ENCODE measurements at regions of chrX and their contacts with region 1.

Region 1: DNA sequence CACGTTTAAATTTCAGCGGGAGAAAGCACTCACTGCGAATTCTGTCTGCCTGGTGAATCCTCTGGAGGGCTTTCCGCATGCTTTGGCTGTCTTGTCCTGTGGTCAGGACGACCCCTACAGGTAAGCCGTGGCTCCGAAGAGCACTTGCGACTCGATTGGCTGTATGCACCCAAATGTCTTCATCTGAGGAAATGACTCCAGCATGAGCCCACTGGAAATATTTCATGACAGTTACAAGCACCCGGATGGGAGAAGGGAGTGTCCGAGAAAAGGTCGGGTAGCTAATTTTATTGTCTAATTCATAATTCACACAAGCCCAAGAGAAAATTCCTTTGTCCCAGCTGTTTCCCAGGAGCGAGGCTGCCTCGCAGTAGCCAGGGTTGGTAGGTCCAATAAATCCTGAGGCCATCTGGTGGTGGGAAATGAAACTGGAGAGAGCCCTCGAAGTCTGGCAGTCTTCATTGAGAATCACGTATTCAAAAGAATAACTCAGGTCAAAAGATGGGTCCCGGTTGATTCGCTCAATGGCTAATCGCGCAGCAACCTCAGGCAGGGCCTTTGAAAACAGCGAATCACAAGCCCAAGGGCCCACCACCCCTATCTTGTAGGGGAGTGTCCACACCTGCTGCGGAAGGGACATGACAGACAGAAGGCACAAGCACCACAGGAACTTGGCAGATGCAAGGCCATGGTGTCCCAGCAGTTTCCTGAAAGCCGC is 6.6 kb downstream of the GUCY2F start:
- DNase-seq: peak in 1 of 2 experiments; percentile 54
- H3K4me3 ChIP-seq: peak overlapping the region in 1 of 4 experiments; percentile 42; a peak in 1 of 8 replicates
- H3K27ac ChIP-seq: no peak overlapping the region
- H3K4me1 ChIP-seq: peaks cover 0 to 10% (median 4%) of the 10 kb centered on the region in 4 experiments; a peak in 4 of 7 replicates
- H3K27me3 ChIP-seq: no peaks in the 10 kb centered on the region
- CTCF ChIP-seq: peak; percentile 54 to 73 (median 72)
- EP300 ChIP-seq: no peak
- POLR2A ChIP-seq: no peak
- RAD21 ChIP-seq: peak; percentile 54 to 59

Region 2: GRCh38 chrX:109399831-109400230 is 75.5 kb before region 1 on chrX:
- CTCF ChIA-PET with region 1: interaction called, 12 read pairs
- POLR2A ChIA-PET with region 1: interaction called, 3 read pairs
- DNase-seq: no peak
- H3K4me3 ChIP-seq: no peak overlapping the region
- H3K27ac ChIP-seq: no peak overlapping the region
- H3K4me1 ChIP-seq: peaks cover 0 to 4% (median under 1%) of the 10 kb centered on the region in 4 experiments; a peak in 2 of 7 replicates
- H3K27me3 ChIP-seq: no peaks in the 10 kb centered on the region
- CTCF ChIP-seq: no peak
- EP300 ChIP-seq: no peak
- POLR2A ChIP-seq: no peak
- RAD21 ChIP-seq: no peak

Region 3: DNA sequence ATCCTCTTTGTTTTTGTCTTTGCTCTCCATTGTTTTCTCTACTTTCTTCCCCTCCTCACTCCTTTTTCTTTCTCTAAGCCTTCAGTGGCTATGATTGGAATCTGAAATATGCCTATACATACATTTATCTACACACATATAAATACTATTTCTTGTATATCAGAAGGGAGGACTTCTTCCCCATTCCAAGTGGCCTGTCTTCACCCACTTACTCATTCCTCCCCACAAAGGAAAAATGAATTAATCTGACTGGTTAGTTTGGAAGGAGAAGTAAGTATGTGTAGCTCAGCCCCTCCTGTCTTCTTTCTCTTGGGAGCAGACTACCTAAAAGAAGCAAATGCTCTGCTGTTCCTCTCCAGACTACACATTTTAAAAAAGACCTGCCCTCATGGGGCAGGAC is 11.1 kb before region 1 on chrX:
- CTCF ChIA-PET with region 1: interaction called, 14 read pairs
- POLR2A ChIA-PET with region 1: interaction called, 4 read pairs
- DNase-seq: no peak
- H3K4me3 ChIP-seq: no peak overlapping the region
- H3K27ac ChIP-seq: no peak overlapping the region
- H3K4me1 ChIP-seq: no peaks in the 10 kb centered on the region
- H3K27me3 ChIP-seq: no peaks in the 10 kb centered on the region
- CTCF ChIP-seq: no peak
- EP300 ChIP-seq: no peak
- POLR2A ChIP-seq: no peak
- RAD21 ChIP-seq: no peak

Region 4: GRCh38 chrX:109485470-109486340 is 10.4 kb after region 1 on chrX:
- CTCF ChIA-PET with region 1: interaction called, 16 read pairs
- POLR2A ChIA-PET with region 1: no interaction called
- DNase-seq: peak in 1 of 2 experiments; percentile 57
- H3K4me3 ChIP-seq: no peak overlapping the region
- H3K27ac ChIP-seq: no peak overlapping the region
- H3K4me1 ChIP-seq: no peaks in the 10 kb centered on the region
- H3K27me3 ChIP-seq: no peaks in the 10 kb centered on the region
- CTCF ChIP-seq: peak; percentile 41 to 99 (median 73)
- EP300 ChIP-seq: no peak
- POLR2A ChIP-seq: no peak
- RAD21 ChIP-seq: peak; percentile 71 to 81

Region 5: GRCh38 chrX:109635176-109635575 is 159.8 kb after region 1 on chrX:
- CTCF ChIA-PET with region 1: interaction called, 20 read pairs
- POLR2A ChIA-PET with region 1: no interaction called
- DNase-seq: no peak
- H3K4me3 ChIP-seq: no peak overlapping the region
- H3K27ac ChIP-seq: no peak overlapping the region
- H3K4me1 ChIP-seq: no peaks in the 10 kb centered on the region
- H3K27me3 ChIP-seq: no peaks in the 10 kb centered on the region
- CTCF ChIP-seq: peak in 2 of 3 experiments; percentile 42 to 64; a peak in 3 of 4 replicates
- EP300 ChIP-seq: no peak
- POLR2A ChIP-seq: no peak
- RAD21 ChIP-seq: peak; percentile 27 to 39; a peak in 3 of 4 replicates